Lower leg skin (tissue), 4 donors: ENCODE measurements at regions of chr7 and their contacts with region 1.

Region 1: DNA sequence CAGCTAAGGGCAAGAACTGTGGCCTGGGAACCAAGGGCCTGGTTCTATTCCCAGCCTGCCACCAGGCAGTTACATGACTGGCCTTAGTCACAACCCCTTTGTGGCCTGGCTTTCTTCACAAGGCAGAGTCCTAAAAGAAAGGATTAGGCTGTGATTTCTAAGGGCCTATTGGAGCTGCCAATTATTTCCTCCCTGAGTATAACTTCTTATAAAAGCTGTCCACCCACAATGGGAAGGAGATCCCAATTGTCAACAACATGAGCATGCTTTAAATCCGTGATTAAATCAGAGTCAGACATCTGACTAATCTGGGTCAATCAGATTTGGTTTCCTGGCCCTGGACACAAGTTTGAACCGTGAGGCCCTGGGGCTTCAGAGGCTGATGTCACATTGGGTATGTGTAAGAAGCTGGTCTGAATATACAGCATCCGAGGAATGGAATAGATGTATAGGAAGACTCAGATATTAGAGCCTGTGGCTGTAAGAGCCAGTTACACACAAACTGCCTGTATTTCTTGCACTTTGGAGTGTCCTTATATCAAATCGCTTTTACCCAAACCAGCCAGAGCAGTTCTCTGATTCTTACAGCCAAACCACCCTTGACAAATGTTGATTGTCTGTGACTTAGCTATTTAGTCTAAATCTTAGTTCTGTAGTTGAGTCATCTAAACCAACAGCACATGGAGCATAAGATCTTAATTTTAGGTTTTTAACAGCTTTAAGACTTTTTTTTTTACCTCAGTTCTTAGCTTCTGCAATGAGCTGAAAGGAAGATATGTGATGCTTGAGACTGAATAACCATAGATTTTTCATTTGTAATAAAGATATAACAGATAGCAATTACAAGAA is 61.3 kb downstream of the ABCB4 start:
- DNase-seq: no peak
- H3K4me3 ChIP-seq: no peak overlapping the region
- CTCF ChIP-seq: no peak
- POLR2A ChIP-seq: no peak

Region 2: DNA sequence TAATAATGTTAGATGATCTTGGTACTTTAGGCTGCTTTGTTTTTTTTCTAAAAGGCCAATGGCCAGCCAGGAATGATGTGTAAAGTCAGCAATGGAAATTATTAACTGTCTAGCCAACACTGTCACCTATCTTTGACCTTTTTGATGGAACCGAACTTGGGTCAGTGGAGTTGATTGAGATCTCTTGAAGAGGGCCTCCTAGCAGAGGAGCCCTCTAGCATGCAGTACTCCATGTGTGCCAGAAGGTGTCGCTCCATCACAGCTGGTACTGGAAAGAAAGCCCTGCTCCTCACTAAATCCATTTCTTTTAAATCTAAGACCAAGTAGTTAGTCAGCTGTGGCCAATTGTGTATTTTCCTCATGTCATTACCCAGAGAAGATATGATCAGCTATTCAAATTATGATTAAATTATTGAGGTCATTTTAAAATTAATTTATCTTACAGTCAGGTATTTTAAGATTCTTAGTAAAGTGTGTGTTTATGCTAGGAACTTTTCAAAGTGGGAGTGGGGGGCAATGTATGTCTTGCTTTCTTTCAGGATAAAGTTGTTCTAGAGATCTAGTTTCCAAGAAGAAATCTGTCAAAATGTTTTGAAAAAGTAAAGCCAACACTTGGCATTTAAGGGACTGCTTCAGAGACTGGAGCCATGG is 101.8 kb before region 1 on chr7:
- intact Hi-C with region 1: loop called (anchors 5 kb)
- DNase-seq: peak in 1 of 2 donors; percentile 43
- H3K4me3 ChIP-seq: no peak overlapping the region
- CTCF ChIP-seq: peak in 1 of 3 donors; percentile 69
- POLR2A ChIP-seq: no peak

Region 3: GRCh38 chr7:87435546-87435945 is 21.4 kb after region 1 on chr7:
- intact Hi-C with region 1: no loop called
- DNase-seq: no peak
- H3K4me3 ChIP-seq: no peak overlapping the region
- CTCF ChIP-seq: no peak
- POLR2A ChIP-seq: no peak